Activated CD4-positive, alpha-beta T cell treated with anti-CD3 and anti-CD28 coated beads, Interleukin-2, amount 10 ng/mL, durations not matched to agents 24 days and 14 days (primary cell): ENCODE measurements at regions of chr1 and their contacts with region 1.

Region 1: DNA sequence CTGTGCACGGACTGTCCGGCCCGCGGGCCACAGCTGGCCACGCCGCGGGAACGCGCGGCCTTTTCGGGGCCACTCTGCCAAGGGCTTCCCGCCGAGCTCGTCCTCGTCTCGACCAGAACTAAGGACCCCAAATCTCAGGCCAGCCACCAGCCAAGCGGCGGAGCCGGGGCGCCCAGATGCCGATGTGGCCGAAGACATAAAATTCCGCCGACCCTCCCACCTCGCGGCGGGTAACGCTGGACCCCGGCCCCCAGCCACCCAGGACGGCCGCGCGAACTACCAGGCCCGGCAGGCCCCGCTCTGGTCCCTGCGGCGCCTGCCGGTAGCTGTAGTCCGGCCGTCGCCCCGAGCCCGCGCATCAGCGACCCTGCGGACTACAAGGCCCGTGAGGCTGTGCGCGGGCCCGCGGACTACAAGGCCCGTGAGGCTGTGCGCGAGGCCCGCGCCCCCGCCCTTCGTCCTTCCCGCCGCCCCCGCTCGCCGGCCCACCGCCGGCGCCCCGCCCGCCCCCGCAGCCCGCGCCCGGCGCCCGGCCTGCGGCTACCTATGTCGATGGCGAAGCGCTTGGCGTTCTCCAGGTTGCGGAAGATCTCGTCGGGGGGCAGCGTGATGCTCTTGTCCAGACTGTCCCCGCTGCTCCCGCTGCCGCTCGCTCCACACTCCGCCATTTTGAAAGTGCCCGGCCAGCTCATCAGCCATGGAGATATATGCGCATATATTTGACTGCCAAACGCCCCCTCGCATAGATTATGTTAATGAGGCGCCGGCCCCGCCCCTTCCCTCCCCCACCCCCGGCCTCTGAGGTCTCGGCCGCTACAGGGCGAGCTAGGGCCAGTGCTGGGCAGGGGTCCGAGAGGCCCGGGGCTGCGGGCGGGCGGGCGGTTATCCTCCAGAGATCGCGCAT is at the start of gene PANK4:
- DNase-seq: peak; percentile 97
- H3K4me3 Mint-ChIP-seq: peak within 1 kb of the TSS; percentile 85
- H3K27ac Mint-ChIP-seq: peak within 1 kb of the TSS; percentile 96
- H3K4me1 Mint-ChIP-seq: peaks cover 38% of the 10 kb centered on the region
- H3K27me3 Mint-ChIP-seq: peaks cover 15% of the 10 kb centered on the region
- total RNA-seq, gene PANK4: 55.2 and 56.7 TPM in 2 replicates

Region 2: DNA sequence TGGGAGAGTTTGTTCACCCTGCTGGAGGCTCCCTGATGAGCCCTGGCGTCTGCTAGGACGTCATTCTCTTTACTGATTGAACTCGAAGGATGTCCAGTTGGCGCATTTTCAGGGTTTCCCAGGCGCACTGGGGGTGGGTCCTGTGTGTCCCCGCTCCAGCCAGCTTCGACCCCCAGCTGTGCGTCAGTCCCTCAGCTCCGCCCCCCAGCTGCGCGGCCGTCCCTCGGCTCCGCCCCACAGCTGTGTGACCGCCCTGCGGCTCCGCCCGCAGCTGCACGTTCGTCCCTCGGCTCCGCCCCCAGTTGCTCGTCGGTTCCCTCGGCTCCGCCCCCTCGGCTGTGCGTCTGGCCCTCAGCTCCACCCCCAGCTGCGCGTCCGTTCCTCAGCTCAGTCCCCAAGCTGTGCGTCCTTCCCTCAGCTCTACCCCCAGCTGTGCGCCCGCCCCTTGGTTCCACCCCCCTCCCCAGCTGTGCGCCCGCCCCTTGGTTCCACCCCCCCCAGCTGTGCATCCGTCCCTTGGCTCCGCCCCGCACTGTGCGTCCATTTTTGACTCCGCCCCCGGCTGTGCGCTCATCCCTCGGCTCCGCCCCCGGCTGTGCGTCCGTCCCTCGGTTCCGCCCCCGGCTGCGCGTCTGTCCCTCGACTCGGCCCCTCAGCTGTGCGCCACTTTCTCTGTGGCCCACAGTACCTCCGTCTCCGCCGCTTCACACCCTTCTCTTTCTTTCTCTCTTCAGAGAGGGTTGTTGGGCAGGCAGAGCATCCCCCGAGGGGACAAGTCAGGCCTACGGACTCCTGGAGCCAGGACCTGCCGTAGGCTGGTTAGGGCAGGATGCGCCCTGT is 392.9 kb before region 1 on chr1:
- intact Hi-C with region 1: loop called (anchors 1 kb)
- DNase-seq: peak; percentile 99
- H3K4me3 Mint-ChIP-seq: peak overlapping the region; percentile 83
- H3K27ac Mint-ChIP-seq: peak overlapping the region; percentile 81
- H3K4me1 Mint-ChIP-seq: peaks cover 4% of the 10 kb centered on the region
- H3K27me3 Mint-ChIP-seq: peaks cover 2% of the 10 kb centered on the region

Region 3: GRCh38 chr1:2391041-2391930 is 134.9 kb before region 1 on chr1 and contains the starts of genes MORN1 and RER1:
- intact Hi-C with region 1: loop called (anchors 1 kb)
- DNase-seq: peak; percentile 100
- H3K4me3 Mint-ChIP-seq: peak within 1 kb of the TSS; percentile 90
- H3K27ac Mint-ChIP-seq: peak within 1 kb of the TSS; percentile 68
- H3K4me1 Mint-ChIP-seq: peaks cover 23% of the 10 kb centered on the region
- H3K27me3 Mint-ChIP-seq: no peaks in the 10 kb centered on the region
- total RNA-seq, gene MORN1: 9.0 and 11.1 TPM in 2 replicates
- total RNA-seq, gene RER1: 164 and 171 TPM in 2 replicates

Region 4: GRCh38 chr1:2545759-2546514 is 19.8 kb after region 1 on chr1:
- intact Hi-C with region 1: loop called (anchors 1 kb)
- DNase-seq: peak; percentile 97
- H3K4me3 Mint-ChIP-seq: peak overlapping the region; percentile 93
- H3K27ac Mint-ChIP-seq: peak overlapping the region; percentile 95
- H3K4me1 Mint-ChIP-seq: peaks cover 11% of the 10 kb centered on the region
- H3K27me3 Mint-ChIP-seq: peaks cover 8% of the 10 kb centered on the region

Region 5: GRCh38 chr1:2642560-2643413 is 116.6 kb after region 1 on chr1:
- intact Hi-C with region 1: loop called (anchors 1 kb)
- DNase-seq: peak; percentile 98
- H3K4me3 Mint-ChIP-seq: peak overlapping the region; percentile 92
- H3K27ac Mint-ChIP-seq: peak overlapping the region; percentile 91
- H3K4me1 Mint-ChIP-seq: peaks cover 3% of the 10 kb centered on the region
- H3K27me3 Mint-ChIP-seq: no peaks in the 10 kb centered on the region